ENCODE measurements at regions of chr10 and their contacts with region 1.

Region 1: GRCh38 chr10:110002801-110003523 is 4.8 kb upstream of the ADD3 start:
- DNase-seq: peak; percentile 24
- CTCF ChIP-seq: no peak

Region 2: GRCh38 chr10:109978481-109978880 is 24.5 kb before region 1 on chr10:
- CTCF ChIA-PET with region 1: interaction called, 30 read pairs
- POLR2A ChIA-PET with region 1: no interaction called
- DNase-seq: peak; percentile 52
- CTCF ChIP-seq: peak; percentile 78

Measured in GM10248 (cell line).